ENCODE measurements at regions of chr1 and their contacts with region 1.

Region 1: GRCh38 chr1:231421993-231422764 is at the start of gene EGLN1:
- DNase-seq: peak; percentile 87
- H3K4me3 Mint-ChIP-seq: peak within 1 kb of the TSS; percentile 84
- H3K27ac Mint-ChIP-seq: peak within 1 kb of the TSS; percentile 81
- H3K4me1 Mint-ChIP-seq: peaks cover 33% of the 10 kb centered on the region
- H3K27me3 Mint-ChIP-seq: no peaks in the 10 kb centered on the region
- total RNA-seq, gene EGLN1: 15.8 to 16.2 TPM

Region 2: DNA sequence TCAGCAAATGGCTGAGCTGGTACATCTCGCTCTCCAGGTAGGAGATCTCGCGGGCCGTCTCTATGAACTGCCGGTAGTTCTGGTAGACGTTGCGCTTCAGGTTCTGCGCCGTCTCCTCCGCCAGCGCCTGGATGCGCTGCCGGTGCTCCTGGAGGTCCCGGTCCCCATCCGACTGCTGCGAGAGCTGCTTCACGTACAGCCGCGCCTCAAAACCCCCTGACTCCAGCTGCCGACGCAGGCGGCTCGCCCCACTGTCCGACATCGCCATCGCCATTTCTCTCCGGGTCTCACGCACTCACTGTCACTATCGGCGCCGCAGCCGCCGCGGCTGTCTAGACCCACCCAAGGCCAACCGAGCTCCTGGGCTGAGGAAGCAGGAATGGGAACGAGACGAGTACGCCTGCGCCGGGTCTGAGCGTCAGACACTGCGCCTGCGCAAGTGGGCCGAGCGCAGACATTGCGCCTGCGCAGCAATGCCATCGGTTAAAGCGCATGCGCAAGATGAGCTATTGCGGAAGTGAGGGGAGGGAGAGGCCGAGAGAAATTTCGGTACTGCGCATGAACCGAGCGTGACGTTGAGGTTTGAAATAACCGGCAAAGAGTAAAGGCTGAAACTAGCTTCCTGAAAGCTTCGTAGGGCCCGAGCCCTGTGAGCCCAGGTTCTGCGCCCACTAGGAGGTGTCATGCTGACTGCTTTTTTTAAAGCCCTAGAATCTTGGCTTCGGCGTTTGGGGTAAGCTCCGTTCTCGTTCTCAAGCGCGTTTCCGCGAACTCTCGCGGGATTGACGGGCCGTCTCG is 84.5 kb before region 1 on chr1 and contains the start of gene EXOC8:
- CTCF ChIA-PET with region 1: interaction called, 6 read pairs
- POLR2A ChIA-PET with region 1: interaction called, 9 read pairs
- intact Hi-C with region 1: loop called (anchors 2 kb)
- DNase-seq: peak; percentile 98
- H3K4me3 Mint-ChIP-seq: peak within 1 kb of the TSS; percentile 100
- H3K27ac Mint-ChIP-seq: peak within 1 kb of the TSS; percentile 98
- H3K4me1 Mint-ChIP-seq: peaks cover 54% of the 10 kb centered on the region
- H3K27me3 Mint-ChIP-seq: peaks cover 3% of the 10 kb centered on the region
- total RNA-seq, gene EXOC8: 14.4 to 15.2 TPM

Region 3: GRCh38 chr1:231390071-231390470 is 32.1 kb before region 1 on chr1:
- CTCF ChIA-PET with region 1: no interaction called
- POLR2A ChIA-PET with region 1: interaction called, 4 read pairs
- intact Hi-C with region 1: loop called (anchors 2 kb)
- DNase-seq: peak; percentile 25
- H3K4me3 Mint-ChIP-seq: no peak overlapping the region
- H3K27ac Mint-ChIP-seq: no peak overlapping the region
- H3K4me1 Mint-ChIP-seq: peaks cover 52% of the 10 kb centered on the region
- H3K27me3 Mint-ChIP-seq: no peaks in the 10 kb centered on the region

Region 4: DNA sequence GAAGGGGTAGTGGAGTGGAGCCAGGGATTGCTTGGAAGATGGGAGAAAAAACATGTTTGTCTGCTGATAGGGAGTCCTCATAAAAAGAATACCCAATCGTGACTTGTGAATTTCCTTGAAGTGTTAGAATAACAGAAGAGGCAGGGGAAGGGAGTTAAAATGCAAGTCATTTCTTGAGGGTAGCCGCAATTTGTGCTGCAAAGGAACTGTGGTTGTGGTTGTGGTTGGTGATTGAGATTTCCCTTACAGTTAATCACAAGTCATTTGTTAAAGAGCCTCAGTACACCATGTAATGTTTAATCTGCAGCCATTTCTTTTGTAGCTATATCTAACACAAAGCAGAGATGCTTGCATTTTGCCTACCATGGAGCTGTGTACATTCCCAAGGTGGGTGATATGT is 38.4 kb after region 1 on chr1:
- CTCF ChIA-PET with region 1: interaction called, 6 read pairs
- POLR2A ChIA-PET with region 1: no interaction called
- intact Hi-C with region 1: loop called (anchors 1 kb)
- DNase-seq: peak; percentile 77
- H3K4me3 Mint-ChIP-seq: no peak overlapping the region
- H3K27ac Mint-ChIP-seq: peak overlapping the region; percentile 23
- H3K4me1 Mint-ChIP-seq: peaks cover 27% of the 10 kb centered on the region
- H3K27me3 Mint-ChIP-seq: peaks cover 61% of the 10 kb centered on the region

Region 5: GRCh38 chr1:231536099-231536498 is 113.9 kb after region 1 on chr1:
- CTCF ChIA-PET with region 1: no interaction called
- POLR2A ChIA-PET with region 1: no interaction called
- intact Hi-C with region 1: no loop called
- DNase-seq: no peak
- H3K4me3 Mint-ChIP-seq: no peak overlapping the region
- H3K27ac Mint-ChIP-seq: no peak overlapping the region
- H3K4me1 Mint-ChIP-seq: peaks cover 28% of the 10 kb centered on the region
- H3K27me3 Mint-ChIP-seq: no peaks in the 10 kb centered on the region

Region 6: GRCh38 chr1:231550448-231550781 is 128.2 kb after region 1 on chr1:
- CTCF ChIA-PET with region 1: interaction called, 3 read pairs
- POLR2A ChIA-PET with region 1: no interaction called
- intact Hi-C with region 1: loop called (anchors 10 kb)
- DNase-seq: peak; percentile 24
- H3K4me3 Mint-ChIP-seq: no peak overlapping the region
- H3K27ac Mint-ChIP-seq: no peak overlapping the region
- H3K4me1 Mint-ChIP-seq: peaks cover 20% of the 10 kb centered on the region
- H3K27me3 Mint-ChIP-seq: no peaks in the 10 kb centered on the region

Measured in activated CD4-positive, alpha-beta memory T cell treated with anti-CD3 and anti-CD28 coated beads for 36 hours (primary cell).